Endothelial cell of umbilical vein (primary cell): ENCODE measurements at regions of chr10 and their contacts with region 1.

Region 1: GRCh38 chr10:21349912-21350286 is 175.6 kb downstream of the SKIDA1 start:
- DNase-seq: no peak
- H3K4me3 ChIP-seq: no peak overlapping the region
- H3K27ac ChIP-seq: peak overlapping the region; percentile 5
- H3K4me1 ChIP-seq: peaks cover 8% of the 10 kb centered on the region
- H3K27me3 ChIP-seq: no peaks in the 10 kb centered on the region
- CTCF ChIP-seq: no peak
- POLR2A ChIP-seq: no peak

Region 2: DNA sequence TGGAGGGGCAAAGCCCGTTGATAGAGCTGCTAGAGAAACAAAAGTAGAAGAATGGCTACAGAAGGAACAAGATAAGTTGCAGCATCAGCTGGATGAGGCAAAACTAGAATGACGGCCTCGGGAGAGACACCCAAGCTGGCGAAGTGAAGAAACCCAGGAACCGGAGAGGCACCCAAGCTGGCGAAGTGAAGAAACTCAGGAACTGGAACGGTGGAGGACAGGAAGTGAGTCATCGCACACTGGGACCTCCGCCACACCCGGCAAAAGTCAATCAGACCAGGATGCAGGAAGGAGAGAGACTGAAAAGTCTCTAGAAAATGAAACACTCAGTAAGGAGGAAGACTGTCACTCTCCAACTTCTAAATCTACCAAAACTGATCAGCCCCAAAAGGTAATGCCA is 319.8 kb before region 1 on chr10:
- CTCF ChIA-PET with region 1: no interaction called
- POLR2A ChIA-PET with region 1: no interaction called
- dilution Hi-C with region 1: no loop called
- intact Hi-C with region 1: no loop called
- DNase-seq: no peak
- H3K4me3 ChIP-seq: no peak overlapping the region
- H3K27ac ChIP-seq: no peak overlapping the region
- H3K4me1 ChIP-seq: no peaks in the 10 kb centered on the region
- H3K27me3 ChIP-seq: peaks cover 0 to under 1% of the 10 kb centered on the region in 2 experiments
- CTCF ChIP-seq: no peak
- POLR2A ChIP-seq: no peak

Region 3: DNA sequence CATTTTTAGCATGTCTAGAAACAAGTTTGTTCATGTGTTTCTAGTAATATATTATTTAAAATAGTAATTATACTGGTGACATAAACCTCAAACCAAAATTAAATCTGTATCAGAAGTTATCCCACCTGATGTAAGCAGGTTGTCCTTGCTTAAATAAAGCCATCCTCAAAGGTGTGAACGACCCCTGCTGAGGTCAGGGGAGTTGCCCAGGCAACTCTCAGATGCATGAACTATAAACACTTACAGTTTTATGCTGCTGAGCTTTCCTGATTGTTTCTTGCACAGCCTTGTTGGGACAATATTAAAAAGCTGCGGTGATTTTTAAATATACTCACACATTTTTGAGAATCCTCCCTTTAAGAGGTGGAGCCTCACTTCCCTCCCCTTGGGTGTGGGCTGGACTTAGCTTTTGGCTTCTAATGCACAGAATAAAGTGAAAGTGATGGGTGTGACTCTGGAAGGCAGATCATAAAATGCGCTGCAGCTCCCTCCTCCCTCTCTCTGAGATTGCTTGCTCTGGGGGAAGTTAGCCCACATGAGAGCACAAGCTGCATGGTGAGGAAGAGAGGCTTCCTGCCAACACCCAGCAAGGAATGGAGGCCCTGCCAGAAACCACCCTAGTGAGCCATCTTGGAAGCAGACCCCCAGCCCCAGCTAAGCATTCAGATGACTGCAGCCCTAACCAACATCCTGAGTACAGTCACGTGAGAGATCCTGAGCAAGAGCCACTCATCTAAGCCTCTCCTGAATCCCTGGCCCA is 22.9 kb after region 1 on chr10:
- CTCF ChIA-PET with region 1: interaction called, 5 read pairs
- POLR2A ChIA-PET with region 1: no interaction called
- dilution Hi-C with region 1: no loop called
- intact Hi-C with region 1: loop called (anchors 2 kb)
- DNase-seq: peak; percentile 88
- H3K4me3 ChIP-seq: peak overlapping the region in 1 of 3 experiments; percentile 15
- H3K27ac ChIP-seq: peak overlapping the region; percentile 14
- H3K4me1 ChIP-seq: peaks cover 26% of the 10 kb centered on the region
- H3K27me3 ChIP-seq: no peaks in the 10 kb centered on the region
- CTCF ChIP-seq: no peak
- POLR2A ChIP-seq: no peak